ENCODE measurements at regions of chr12 and their contacts with region 1.

Region 1: GRCh38 chr12:113347107-113347506 is 11.3 kb upstream of the PLBD2 start:
- DNase-seq: no peak
- H3K4me3 ChIP-seq: no peak overlapping the region
- H3K27ac ChIP-seq: no peak overlapping the region
- H3K4me1 ChIP-seq: no peaks in the 10 kb centered on the region
- H3K27me3 ChIP-seq: no peaks in the 10 kb centered on the region
- CTCF ChIP-seq: no peak

Region 2: DNA sequence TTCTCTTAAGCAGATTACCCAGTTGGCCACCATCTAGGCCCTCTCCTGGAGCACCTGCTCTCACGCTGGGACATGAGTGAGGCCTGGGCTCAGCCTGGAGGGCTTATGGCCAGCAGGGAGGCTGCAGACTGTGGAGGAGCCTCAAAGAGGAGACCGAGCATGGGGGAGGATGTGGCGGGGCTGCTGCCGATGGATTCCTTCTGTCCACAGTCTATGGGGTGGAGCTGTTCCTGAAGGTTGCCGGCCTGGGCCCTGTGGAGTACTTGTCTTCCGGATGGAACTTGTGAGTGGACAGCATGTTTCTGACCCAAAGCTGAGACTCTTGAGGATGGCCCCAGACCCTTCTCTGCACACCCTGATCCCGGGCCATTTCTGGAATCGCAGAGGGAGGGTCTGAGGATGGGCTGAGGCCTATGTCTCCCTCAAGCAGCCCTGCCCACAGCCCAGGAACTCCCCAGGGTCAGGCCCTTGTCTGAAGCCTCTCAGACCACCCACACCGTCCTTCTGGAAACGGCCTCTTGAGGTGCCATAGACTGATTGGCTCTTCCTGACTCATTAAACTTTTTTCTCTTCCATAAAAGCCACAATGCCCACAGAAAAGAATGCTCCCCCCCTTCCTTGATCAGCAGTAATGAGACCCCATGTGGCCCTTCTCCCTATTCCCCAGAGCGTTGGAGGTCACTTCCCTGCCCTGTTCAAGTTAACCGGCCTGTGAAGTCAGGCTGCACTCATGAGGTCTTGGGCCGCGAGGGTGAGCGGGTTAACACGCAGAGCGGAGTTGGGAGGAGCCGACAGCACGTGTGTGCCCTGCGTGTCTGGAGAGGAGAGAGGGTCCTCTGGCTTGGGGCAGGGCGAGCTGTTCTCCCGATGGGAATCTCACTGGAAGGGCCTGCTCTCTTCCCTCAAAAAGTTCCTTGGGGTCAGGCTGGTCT is 61.2 kb before region 1 on chr12:
- CTCF ChIA-PET with region 1: no interaction called
- POLR2A ChIA-PET with region 1: no interaction called
- intact Hi-C with region 1: no loop called
- DNase-seq: no peak
- H3K4me3 ChIP-seq: no peak overlapping the region
- H3K27ac ChIP-seq: no peak overlapping the region
- H3K4me1 ChIP-seq: no peaks in the 10 kb centered on the region
- H3K27me3 ChIP-seq: no peaks in the 10 kb centered on the region
- CTCF ChIP-seq: no peak

Region 3: GRCh38 chr12:113299619-113300237 is 47.4 kb before region 1 on chr12:
- CTCF ChIA-PET with region 1: no interaction called
- POLR2A ChIA-PET with region 1: no interaction called
- intact Hi-C with region 1: no loop called
- DNase-seq: peak; percentile 87 to 96
- H3K4me3 ChIP-seq: no peak overlapping the region
- H3K27ac ChIP-seq: peak overlapping the region; percentile 62
- H3K4me1 ChIP-seq: peaks cover 19% of the 10 kb centered on the region
- H3K27me3 ChIP-seq: no peaks in the 10 kb centered on the region
- CTCF ChIP-seq: no peak

Region 4: GRCh38 chr12:113325916-113326315 is 21.2 kb before region 1 on chr12:
- CTCF ChIA-PET with region 1: no interaction called
- POLR2A ChIA-PET with region 1: interaction called, 32 read pairs
- intact Hi-C with region 1: no loop called
- DNase-seq: no peak
- H3K4me3 ChIP-seq: no peak overlapping the region
- H3K27ac ChIP-seq: no peak overlapping the region
- H3K4me1 ChIP-seq: peaks cover 18% of the 10 kb centered on the region
- H3K27me3 ChIP-seq: no peaks in the 10 kb centered on the region
- CTCF ChIP-seq: no peak

Region 5: DNA sequence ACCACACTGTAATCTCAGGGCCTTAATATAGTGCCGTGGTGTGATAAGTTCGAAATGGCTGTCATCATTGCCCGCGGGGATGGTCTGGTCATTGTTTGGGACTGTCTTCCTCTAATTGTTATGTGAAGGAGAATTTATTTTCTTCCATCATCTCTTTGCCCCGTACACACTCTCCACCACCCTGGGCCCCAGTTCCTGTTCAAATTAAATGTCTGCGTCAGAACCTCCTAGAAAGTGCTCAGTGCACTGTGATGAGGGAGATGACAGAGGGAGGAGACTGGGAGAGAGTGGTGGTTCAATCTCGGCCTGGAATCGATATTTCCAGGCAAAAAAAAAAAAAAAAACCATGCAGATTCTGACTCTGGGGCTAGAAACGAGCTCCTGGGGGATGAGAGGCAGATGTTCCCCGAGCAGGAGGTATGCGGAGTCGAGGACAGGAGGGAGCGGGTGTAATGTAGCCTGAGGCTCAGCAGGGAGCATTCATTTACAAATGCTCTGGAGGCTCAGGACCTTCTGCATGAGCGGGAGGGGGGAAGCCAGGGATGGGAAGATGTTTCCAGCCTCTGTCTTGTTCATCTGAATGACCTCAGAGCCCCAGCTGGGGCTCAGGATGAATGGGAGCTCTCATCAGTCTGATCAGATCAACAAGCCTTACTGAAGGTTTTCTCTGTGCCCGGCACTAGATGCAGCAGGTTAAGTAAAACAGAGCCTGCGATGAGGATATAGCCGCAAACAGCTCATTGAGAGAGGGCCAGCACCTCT is 839.3 kb after region 1 on chr12:
- CTCF ChIA-PET with region 1: no interaction called
- POLR2A ChIA-PET with region 1: no interaction called
- intact Hi-C with region 1: no loop called
- DNase-seq: no peak
- H3K4me3 ChIP-seq: no peak overlapping the region
- H3K27ac ChIP-seq: no peak overlapping the region
- H3K4me1 ChIP-seq: no peaks in the 10 kb centered on the region
- H3K27me3 ChIP-seq: peaks cover 62% of the 10 kb centered on the region
- CTCF ChIP-seq: no peak